Activated CD4-positive, alpha-beta T cell treated with anti-CD3 and anti-CD28 coated beads, Interleukin-2, amount 10 ng/mL, durations not matched to agents 7 days and 5 days (primary cell): ENCODE measurements at regions of chr17 and their contacts with region 1.

Region 1: GRCh38 chr17:8383143-8383822 is at the start of gene RPL26:
- DNase-seq: peak; percentile 98
- H3K4me3 Mint-ChIP-seq: peak within 1 kb of the TSS; percentile 99
- H3K27ac Mint-ChIP-seq: peak within 1 kb of the TSS; percentile 98
- H3K4me1 Mint-ChIP-seq: peaks cover 68% of the 10 kb centered on the region
- H3K27me3 Mint-ChIP-seq: no peaks in the 10 kb centered on the region
- total RNA-seq, gene RPL26: 2,050 to 2,305 TPM

Region 2: GRCh38 chr17:8369944-8370343 is 13.3 kb before region 1 on chr17:
- CTCF ChIA-PET with region 1: interaction called, 11 read pairs
- POLR2A ChIA-PET with region 1: no interaction called
- DNase-seq: no peak
- H3K4me3 Mint-ChIP-seq: no peak overlapping the region
- H3K27ac Mint-ChIP-seq: no peak overlapping the region
- H3K4me1 Mint-ChIP-seq: peaks cover 6% of the 10 kb centered on the region
- H3K27me3 Mint-ChIP-seq: no peaks in the 10 kb centered on the region

Region 3: DNA sequence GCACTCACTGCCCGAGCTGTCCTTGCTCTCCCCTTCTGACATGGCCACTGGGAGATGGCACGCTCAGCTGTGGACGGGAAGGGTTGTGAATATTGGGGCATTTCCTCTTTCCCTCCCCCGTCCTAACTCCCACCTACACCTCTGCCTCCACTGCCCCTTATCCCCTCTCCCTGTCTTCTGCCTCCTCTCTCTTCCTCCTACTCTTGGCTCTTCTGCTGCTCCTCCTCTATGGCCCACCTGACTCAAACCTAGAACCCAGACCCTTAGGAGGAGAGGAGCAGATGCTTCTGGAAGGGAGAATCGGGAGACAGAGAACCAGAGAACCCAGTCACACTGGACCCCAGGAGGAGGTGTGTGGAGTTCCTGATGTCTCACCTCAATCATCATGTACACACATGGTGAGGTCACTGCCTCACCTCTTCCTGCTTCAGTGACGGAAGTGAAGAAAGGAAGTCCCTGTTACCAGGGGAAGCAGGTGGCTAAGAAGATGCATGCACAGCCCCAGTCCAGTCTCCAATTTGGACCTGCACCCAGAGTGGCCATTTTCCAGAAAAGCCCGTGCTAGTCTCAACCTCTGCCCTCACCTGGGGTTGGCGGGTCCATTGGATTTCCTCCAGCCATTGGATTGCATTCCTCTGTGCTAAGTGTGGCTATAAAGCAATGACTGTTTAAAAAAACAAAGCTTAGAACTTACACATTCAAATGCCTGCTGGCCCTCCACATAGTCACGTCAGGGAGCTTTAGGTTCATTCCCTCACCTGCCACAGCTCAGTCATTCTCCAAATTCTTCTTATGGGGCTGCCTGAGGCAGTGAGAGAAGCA is 10.3 kb after region 1 on chr17:
- CTCF ChIA-PET with region 1: interaction called, 17 read pairs
- POLR2A ChIA-PET with region 1: interaction called, 3 read pairs
- DNase-seq: peak; percentile 57
- H3K4me3 Mint-ChIP-seq: no peak overlapping the region
- H3K27ac Mint-ChIP-seq: peak overlapping the region; percentile 94
- H3K4me1 Mint-ChIP-seq: peaks cover 12% of the 10 kb centered on the region
- H3K27me3 Mint-ChIP-seq: peaks cover 18% of the 10 kb centered on the region

Region 4: DNA sequence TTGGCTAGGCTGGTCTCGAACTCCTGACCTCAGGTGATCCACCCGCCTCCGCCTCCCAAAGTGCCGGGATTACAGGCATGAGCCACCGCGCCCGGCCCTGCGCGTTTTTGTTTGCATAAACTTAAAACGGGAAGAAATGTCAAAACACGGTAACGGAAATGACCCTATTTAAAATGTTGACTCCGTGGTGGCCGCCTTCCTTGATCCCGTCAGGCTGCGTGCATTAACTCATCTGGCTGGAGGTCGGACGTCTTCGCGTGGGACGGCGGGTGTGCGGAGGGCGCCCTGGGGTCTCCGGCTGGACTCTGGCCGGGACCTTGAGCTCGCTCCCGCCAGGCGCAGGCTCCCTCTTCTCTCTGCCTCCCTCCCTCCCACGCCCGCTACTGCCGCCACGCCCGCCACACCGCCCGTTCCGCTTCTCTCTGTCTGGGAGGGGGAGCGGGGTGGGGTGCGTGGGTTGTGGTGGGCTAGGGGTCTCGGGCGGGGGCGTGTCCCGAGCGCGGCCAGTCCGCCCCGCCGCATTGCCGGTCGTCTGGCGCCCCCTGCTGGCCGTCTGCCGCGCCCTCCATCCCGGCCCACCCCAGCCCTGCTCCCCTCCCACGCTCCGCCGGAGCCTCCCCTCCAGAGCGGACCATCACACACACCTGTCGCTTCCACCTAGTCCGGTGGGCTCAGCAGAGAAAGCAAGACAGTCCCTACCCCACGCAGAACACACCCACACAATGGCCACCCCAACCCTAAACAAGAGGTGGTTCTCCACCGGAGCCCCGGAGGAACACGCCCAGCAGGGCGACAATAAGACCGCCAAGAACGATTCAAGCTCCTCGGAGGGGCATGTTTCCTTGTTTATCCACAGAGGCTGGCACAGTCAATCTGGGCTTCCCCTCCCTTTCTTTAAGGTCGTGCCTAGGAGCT is 362.6 kb after region 1 on chr17:
- CTCF ChIA-PET with region 1: interaction called, 20 read pairs
- POLR2A ChIA-PET with region 1: interaction called, 5 read pairs
- DNase-seq: peak; percentile 72
- H3K4me3 Mint-ChIP-seq: peak overlapping the region; percentile 82
- H3K27ac Mint-ChIP-seq: peak overlapping the region; percentile 96
- H3K4me1 Mint-ChIP-seq: peaks cover 17% of the 10 kb centered on the region
- H3K27me3 Mint-ChIP-seq: peaks cover 14% of the 10 kb centered on the region